Breast epithelium (tissue), 4 donors: ENCODE measurements at regions of chr3 and their contacts with region 1.

Region 1: DNA sequence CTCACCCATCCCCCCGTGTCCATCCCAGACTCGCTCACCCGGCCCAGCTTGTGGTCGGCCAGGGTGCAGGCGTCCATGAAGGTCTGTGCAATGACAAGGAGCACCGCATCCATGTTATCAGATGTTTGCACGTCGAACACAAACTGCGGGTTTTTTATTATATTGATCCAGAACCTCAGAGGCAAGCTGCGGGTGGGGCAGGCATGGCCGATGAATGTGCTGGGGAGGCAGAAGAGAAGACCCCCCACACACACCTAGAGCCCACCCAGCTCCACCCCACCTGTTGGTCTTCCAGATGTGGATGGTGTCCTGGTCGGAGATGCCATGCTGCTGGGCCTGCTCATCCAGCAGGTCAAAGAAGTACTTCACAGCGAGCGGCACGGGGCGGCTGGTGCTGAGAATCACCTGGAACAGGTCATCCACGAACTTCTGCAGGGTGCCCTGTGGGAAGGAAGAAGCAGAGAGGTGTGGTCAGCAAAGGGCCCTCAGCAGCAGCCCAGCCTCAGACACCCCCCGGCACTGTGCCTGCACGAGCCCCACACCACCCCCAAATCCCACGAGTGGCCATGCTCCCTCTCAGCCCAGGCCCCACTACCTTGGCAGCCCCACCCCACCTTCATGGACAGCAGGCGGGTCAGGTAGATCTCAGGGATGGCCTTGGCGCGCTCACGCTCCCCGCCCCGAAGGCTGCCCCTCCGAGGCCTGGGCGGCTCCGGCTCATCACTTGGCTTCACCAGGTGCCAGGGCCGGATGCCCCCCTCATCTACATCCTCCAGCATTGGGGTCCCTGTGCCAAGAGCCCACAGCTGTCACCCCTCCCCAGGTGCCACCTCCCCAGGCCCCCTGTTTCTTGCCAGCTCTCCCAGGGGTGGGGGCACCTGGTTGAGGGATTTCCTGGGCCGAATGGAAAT is 20.3 kb downstream of the PLXNB1 start:
- DNase-seq: peak; percentile 16 to 47
- H3K4me3 ChIP-seq: no peak overlapping the region
- H3K27ac ChIP-seq: no peak overlapping the region
- H3K4me1 ChIP-seq: no peaks in the 10 kb centered on the region
- H3K27me3 ChIP-seq: no peaks in the 10 kb centered on the region
- CTCF ChIP-seq: no peak
- POLR2A ChIP-seq: no peak

Region 2: GRCh38 chr3:48273594-48274211 is 135.8 kb before region 1 on chr3:
- intact Hi-C with region 1: loop called (anchors 10 kb)
- DNase-seq: no peak
- H3K4me3 ChIP-seq: no peak overlapping the region
- H3K27ac ChIP-seq: no peak overlapping the region
- H3K4me1 ChIP-seq: peaks cover 0 to 6% of the 10 kb centered on the region in 2 donors
- H3K27me3 ChIP-seq: no peaks in the 10 kb centered on the region
- CTCF ChIP-seq: peak; percentile 15 to 88 (median 85)
- POLR2A ChIP-seq: no peak

Region 3: GRCh38 chr3:48811524-48811923 is 402.0 kb after region 1 on chr3:
- intact Hi-C with region 1: no loop called
- DNase-seq: no peak
- H3K4me3 ChIP-seq: no peak overlapping the region
- H3K27ac ChIP-seq: no peak overlapping the region
- H3K4me1 ChIP-seq: no peaks in the 10 kb centered on the region
- H3K27me3 ChIP-seq: no peaks in the 10 kb centered on the region
- CTCF ChIP-seq: no peak
- POLR2A ChIP-seq: no peak